ENCODE measurements at regions of chr2 and their contacts with region 1.

Region 1: DNA sequence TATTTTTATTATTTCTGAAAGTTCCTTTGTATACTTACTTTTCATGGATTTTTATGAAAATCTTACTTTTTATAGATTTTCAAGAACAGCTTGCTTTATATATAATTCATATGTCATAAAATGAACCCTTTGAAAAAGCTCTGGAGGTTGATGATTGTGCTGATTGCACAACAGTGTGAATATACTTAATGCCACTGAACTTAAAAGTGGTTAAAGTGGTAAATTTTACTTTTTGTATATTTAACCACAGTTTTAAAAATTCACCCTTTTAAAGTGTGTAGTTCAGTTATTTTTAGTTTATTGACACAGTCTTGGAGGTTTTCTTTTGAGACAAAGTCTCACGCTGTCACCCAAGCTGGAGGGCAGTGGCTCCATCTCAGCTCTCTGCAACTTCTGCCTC is 8.4 kb downstream of the SANBR start:
- DNase-seq: no peak

Region 2: DNA sequence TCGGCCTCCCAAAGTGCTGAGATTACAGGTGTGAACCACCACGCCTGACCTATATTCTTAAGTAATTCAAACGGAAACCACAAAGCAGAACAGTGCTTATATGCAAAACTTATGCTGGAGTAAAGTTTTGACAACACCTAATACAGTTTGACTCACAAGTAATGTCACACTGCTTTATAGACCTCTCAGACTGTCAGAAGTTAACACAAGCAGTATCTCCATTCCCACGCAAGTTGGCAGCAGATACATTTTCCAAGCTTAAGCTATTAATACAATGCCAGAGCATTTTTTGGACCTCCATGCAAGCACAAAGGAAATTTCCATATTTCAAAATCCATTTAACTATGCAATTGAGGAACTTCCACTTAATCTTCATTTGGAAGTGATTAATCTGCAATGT is 29.5 kb before region 1 on chr2:
- intact Hi-C with region 1: no loop called
- DNase-seq: no peak

Region 3: GRCh38 chr2:61125123-61125710 is 51.1 kb after region 1 on chr2:
- intact Hi-C with region 1: loop called in 1 of 2 experiments (anchors 2 kb)
- DNase-seq: no peak

Region 4: DNA sequence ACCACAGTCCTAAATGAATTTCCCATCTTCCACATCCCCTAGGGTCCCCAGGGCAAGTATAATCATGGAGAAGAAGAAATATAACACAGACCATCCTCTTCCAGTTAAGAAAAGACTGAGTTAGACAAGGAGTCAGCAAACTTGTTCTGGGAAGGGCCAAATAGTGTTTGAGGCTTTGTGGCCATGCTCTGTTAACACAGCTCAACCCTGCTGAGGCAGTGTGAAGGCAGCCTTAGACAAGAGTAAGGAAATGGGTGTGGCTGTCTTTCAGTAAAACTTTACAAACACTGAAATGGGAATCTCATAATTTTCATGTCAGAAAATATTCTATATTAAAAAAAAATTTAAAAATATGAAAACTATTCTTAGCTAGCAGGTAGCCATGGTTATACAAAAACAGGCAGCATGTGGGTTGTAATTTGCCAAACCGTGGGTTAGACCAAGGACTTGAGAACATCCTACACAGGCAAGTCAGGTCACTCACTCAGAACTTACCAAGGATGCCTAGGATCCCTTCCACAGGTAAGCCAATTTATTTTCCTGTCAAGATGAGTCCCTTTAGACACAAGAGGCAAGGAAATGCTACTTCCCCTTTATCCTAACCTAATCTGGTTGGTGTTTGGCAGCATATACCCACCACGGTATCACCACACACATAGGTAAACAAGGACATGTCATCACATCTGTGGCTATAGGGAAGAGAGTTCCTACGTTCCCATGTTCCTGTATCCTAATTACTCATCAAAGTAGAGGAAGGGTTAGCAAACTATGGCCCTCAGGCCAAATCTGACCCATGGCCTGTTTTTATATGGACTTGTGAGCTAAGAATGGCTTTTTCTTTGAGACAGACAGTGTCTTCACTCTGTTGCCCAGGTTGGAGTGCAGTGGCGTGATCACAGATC is 119.8 kb after region 1 on chr2:
- intact Hi-C with region 1: no loop called
- DNase-seq: no peak